ENCODE measurements at regions of chr12 and their contacts with region 1.

Region 1: GRCh38 chr12:57520053-57520871 is at the start of gene DDIT3:
- DNase-seq: peak; percentile 97
- ATAC-seq: peak; percentile 71
- H3K4me3 ChIP-seq: peak within 1 kb of the TSS; percentile 93 to 99 (median 97)
- H3K27ac ChIP-seq: peak within 1 kb of the TSS; percentile 97
- H3K4me1 ChIP-seq: peaks cover 48% of the 10 kb centered on the region
- H3K27me3 ChIP-seq: no peaks in the 10 kb centered on the region; a peak in 1 of 5 replicates
- CTCF ChIP-seq: peak; percentile 30; the same call in 1 of the 2 replicates
- EP300 ChIP-seq: peak in 1 of 2 experiments; percentile 38; a peak in 2 of 4 replicates
- POLR2A ChIP-seq: peak; percentile 98 to 100
- RAD21 ChIP-seq: peak; percentile 51; the same call in 1 of the 2 replicates
- total RNA-seq, gene DDIT3: 17.5 and 27.5 TPM in 2 replicates

Region 2: GRCh38 chr12:57452937-57453509 is 67.2 kb before region 1 on chr12:
- CTCF ChIA-PET with region 1: no interaction called
- POLR2A ChIA-PET with region 1: interaction called, 24 read pairs
- in situ Hi-C with region 1: no loop called
- intact Hi-C with region 1: no loop called
- DNase-seq: peak; percentile 73
- ATAC-seq: peak; percentile 29
- H3K4me3 ChIP-seq: 0 out of 6 replicates have a peak overlapping the region, but pooled peaks of 1 of the 3 experiments have one; percentile 3
- H3K27ac ChIP-seq: no peak overlapping the region
- H3K4me1 ChIP-seq: peaks cover 81% of the 10 kb centered on the region
- H3K27me3 ChIP-seq: no peaks in the 10 kb centered on the region; a peak in 1 of 5 replicates
- CTCF ChIP-seq: peak; percentile 98
- EP300 ChIP-seq: peak in 1 of 2 experiments; percentile 5; a peak in 1 of 4 replicates
- POLR2A ChIP-seq: no peak
- RAD21 ChIP-seq: peak; percentile 91

Region 3: DNA sequence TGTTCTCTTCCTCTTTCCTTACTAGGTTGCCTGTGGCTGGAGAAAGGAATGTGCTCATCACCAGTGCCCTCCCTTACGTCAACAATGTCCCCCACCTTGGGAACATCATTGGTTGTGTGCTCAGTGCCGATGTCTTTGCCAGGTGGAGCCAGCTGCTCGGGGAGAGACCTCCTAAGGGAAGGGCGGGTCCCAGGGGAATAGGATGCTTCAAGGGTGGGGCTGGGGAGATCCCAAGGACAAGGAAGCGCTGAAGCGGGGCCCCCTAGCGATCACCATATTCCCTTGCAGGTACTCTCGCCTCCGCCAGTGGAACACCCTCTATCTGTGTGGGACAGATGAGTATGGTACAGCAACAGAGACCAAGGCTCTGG is 22.1 kb before region 1 on chr12:
- CTCF ChIA-PET with region 1: no interaction called
- POLR2A ChIA-PET with region 1: interaction called, 90 read pairs
- in situ Hi-C with region 1: no loop called
- intact Hi-C with region 1: no loop called
- DNase-seq: no peak
- ATAC-seq: no peak
- H3K4me3 ChIP-seq: no peak overlapping the region
- H3K27ac ChIP-seq: no peak overlapping the region
- H3K4me1 ChIP-seq: peaks cover 10% of the 10 kb centered on the region
- H3K27me3 ChIP-seq: no peaks in the 10 kb centered on the region
- CTCF ChIP-seq: no peak
- EP300 ChIP-seq: no peak
- POLR2A ChIP-seq: no peak
- RAD21 ChIP-seq: no peak

Region 4: GRCh38 chr12:57576613-57577160 is 56.4 kb after region 1 on chr12:
- CTCF ChIA-PET with region 1: no interaction called
- POLR2A ChIA-PET with region 1: interaction called, 40 read pairs
- in situ Hi-C with region 1: no loop called
- intact Hi-C with region 1: loop called (anchors 1 kb)
- DNase-seq: peak; percentile 88
- ATAC-seq: peak; percentile 55
- H3K4me3 ChIP-seq: peak overlapping the region; percentile 33 to 66 (median 36); a peak in 5 of 6 replicates
- H3K27ac ChIP-seq: peak overlapping the region; percentile 99
- H3K4me1 ChIP-seq: peaks cover 78% of the 10 kb centered on the region
- H3K27me3 ChIP-seq: no peaks in the 10 kb centered on the region
- CTCF ChIP-seq: no peak
- EP300 ChIP-seq: no peak
- POLR2A ChIP-seq: no peak
- RAD21 ChIP-seq: no peak

Region 5: GRCh38 chr12:57611108-57611809 is 91.0 kb after region 1 on chr12 and contains the start of gene ARHGEF25:
- CTCF ChIA-PET with region 1: no interaction called
- POLR2A ChIA-PET with region 1: interaction called, 16 read pairs
- in situ Hi-C with region 1: no loop called
- intact Hi-C with region 1: no loop called
- DNase-seq: peak; percentile 41
- ATAC-seq: peak; percentile 80
- H3K4me3 ChIP-seq: peak within 1 kb of the TSS; percentile 71 to 78 (median 76)
- H3K27ac ChIP-seq: peak within 1 kb of the TSS; percentile 22
- H3K4me1 ChIP-seq: peaks cover 34% of the 10 kb centered on the region
- H3K27me3 ChIP-seq: peaks cover 0 to 19% of the 10 kb centered on the region in 2 experiments; a peak in 2 of 5 replicates
- CTCF ChIP-seq: peak; percentile 22; the same call in 1 of the 2 replicates
- EP300 ChIP-seq: no peak
- POLR2A ChIP-seq: peak; percentile 49 to 80; a peak in 3 of 4 replicates
- RAD21 ChIP-seq: no peak
- total RNA-seq, gene ARHGEF25: 10.1 and 11.5 TPM in 2 replicates

Region 6: GRCh38 chr12:57815177-57816000 is 295.1 kb after region 1 on chr12:
- CTCF ChIA-PET with region 1: no interaction called
- POLR2A ChIA-PET with region 1: no interaction called
- in situ Hi-C with region 1: no loop called
- intact Hi-C with region 1: no loop called
- DNase-seq: peak; percentile 42
- ATAC-seq: peak; percentile 62
- H3K4me3 ChIP-seq: no peak overlapping the region
- H3K27ac ChIP-seq: no peak overlapping the region
- H3K4me1 ChIP-seq: peaks cover 84% of the 10 kb centered on the region
- H3K27me3 ChIP-seq: no peaks in the 10 kb centered on the region
- CTCF ChIP-seq: peak; percentile 59
- EP300 ChIP-seq: no peak
- POLR2A ChIP-seq: no peak
- RAD21 ChIP-seq: no peak

Region 7: DNA sequence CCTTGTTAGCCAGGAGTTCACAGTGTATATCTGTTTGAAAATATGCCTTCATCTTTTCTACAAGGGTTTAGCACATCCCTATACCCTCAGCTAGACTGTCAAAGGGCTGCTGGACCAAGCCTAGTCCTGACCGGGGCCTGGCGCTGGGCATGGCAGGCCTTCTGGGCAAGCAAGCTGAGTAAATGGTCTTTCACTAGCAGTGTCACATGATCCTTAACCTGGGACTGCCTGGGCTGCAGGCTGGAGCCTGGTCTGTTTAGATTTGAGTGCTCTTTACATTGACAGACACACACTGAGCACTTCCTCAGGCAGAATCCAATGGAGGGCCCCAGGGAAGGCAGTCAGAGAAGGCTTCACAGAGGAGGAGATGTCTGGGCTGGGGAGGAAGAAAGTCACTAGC is 305.2 kb after region 1 on chr12:
- CTCF ChIA-PET with region 1: no interaction called
- POLR2A ChIA-PET with region 1: no interaction called
- in situ Hi-C with region 1: no loop called
- intact Hi-C with region 1: no loop called
- DNase-seq: no peak
- ATAC-seq: no peak
- H3K4me3 ChIP-seq: no peak overlapping the region
- H3K27ac ChIP-seq: no peak overlapping the region
- H3K4me1 ChIP-seq: peaks cover 14% of the 10 kb centered on the region
- H3K27me3 ChIP-seq: no peaks in the 10 kb centered on the region
- CTCF ChIP-seq: no peak
- EP300 ChIP-seq: no peak
- POLR2A ChIP-seq: no peak
- RAD21 ChIP-seq: no peak

Measured in HepG2 (cell line).